ENCODE measurements at regions of chr7 and their contacts with region 1.

Region 1: GRCh38 chr7:106041140-106041717 is 70.9 kb downstream of the SYPL1 start:
- DNase-seq: peak in 3 of 9 experiments; percentile 40 to 59 (median 51)
- ATAC-seq: peak; percentile 32
- H3K4me3 ChIP-seq: no peak overlapping the region
- H3K4me3 Mint-ChIP-seq: peak overlapping the region; percentile 6
- H3K27ac ChIP-seq: no peak overlapping the region
- H3K27ac Mint-ChIP-seq: peak overlapping the region; percentile 68
- H3K4me1 ChIP-seq: peaks cover 28% of the 10 kb centered on the region
- H3K4me1 Mint-ChIP-seq: peaks cover 39% of the 10 kb centered on the region
- H3K27me3 ChIP-seq: no peaks in the 10 kb centered on the region
- H3K27me3 Mint-ChIP-seq: no peaks in the 10 kb centered on the region
- CTCF ChIP-seq: peak; percentile 61

Region 2: GRCh38 chr7:105664816-105665525 is 376.3 kb before region 1 on chr7:
- CTCF ChIA-PET with region 1: interaction called, 114 read pairs
- POLR2A ChIA-PET with region 1: no interaction called
- intact Hi-C with region 1: no loop called
- DNase-seq: no peak
- ATAC-seq: no peak
- H3K4me3 ChIP-seq: no peak overlapping the region
- H3K4me3 Mint-ChIP-seq: no peak overlapping the region
- H3K27ac ChIP-seq: no peak overlapping the region
- H3K27ac Mint-ChIP-seq: no peak overlapping the region
- H3K4me1 ChIP-seq: no peaks in the 10 kb centered on the region
- H3K4me1 Mint-ChIP-seq: no peaks in the 10 kb centered on the region
- H3K27me3 ChIP-seq: no peaks in the 10 kb centered on the region
- H3K27me3 Mint-ChIP-seq: no peaks in the 10 kb centered on the region
- CTCF ChIP-seq: no peak

Region 3: GRCh38 chr7:105691733-105692564 is 349.3 kb before region 1 on chr7:
- CTCF ChIA-PET with region 1: interaction called, 17 read pairs
- POLR2A ChIA-PET with region 1: no interaction called
- intact Hi-C with region 1: loop called in 1 of 2 experiments (anchors 1 kb)
- DNase-seq: peak; percentile 45 to 91 (median 71)
- ATAC-seq: peak; percentile 75
- H3K4me3 ChIP-seq: peak overlapping the region; percentile 69 to 72
- H3K4me3 Mint-ChIP-seq: peak overlapping the region; percentile 93
- H3K27ac ChIP-seq: peak overlapping the region; percentile 85 to 96
- H3K27ac Mint-ChIP-seq: peak overlapping the region; percentile 98
- H3K4me1 ChIP-seq: peaks cover 34% of the 10 kb centered on the region
- H3K4me1 Mint-ChIP-seq: peaks cover 64% of the 10 kb centered on the region
- H3K27me3 ChIP-seq: no peaks in the 10 kb centered on the region
- H3K27me3 Mint-ChIP-seq: no peaks in the 10 kb centered on the region
- CTCF ChIP-seq: no peak

Region 4: GRCh38 chr7:105934572-105935185 is 106.5 kb before region 1 on chr7:
- CTCF ChIA-PET with region 1: interaction called, 46 read pairs
- POLR2A ChIA-PET with region 1: no interaction called
- intact Hi-C with region 1: loop called (anchors 1 to 2 kb)
- DNase-seq: peak in 2 of 9 experiments; percentile 11 to 49
- ATAC-seq: no peak
- H3K4me3 ChIP-seq: no peak overlapping the region
- H3K4me3 Mint-ChIP-seq: no peak overlapping the region
- H3K27ac ChIP-seq: no peak overlapping the region
- H3K27ac Mint-ChIP-seq: no peak overlapping the region
- H3K4me1 ChIP-seq: no peaks in the 10 kb centered on the region
- H3K4me1 Mint-ChIP-seq: peaks cover 8% of the 10 kb centered on the region
- H3K27me3 ChIP-seq: no peaks in the 10 kb centered on the region
- H3K27me3 Mint-ChIP-seq: no peaks in the 10 kb centered on the region
- CTCF ChIP-seq: no peak

Region 5: DNA sequence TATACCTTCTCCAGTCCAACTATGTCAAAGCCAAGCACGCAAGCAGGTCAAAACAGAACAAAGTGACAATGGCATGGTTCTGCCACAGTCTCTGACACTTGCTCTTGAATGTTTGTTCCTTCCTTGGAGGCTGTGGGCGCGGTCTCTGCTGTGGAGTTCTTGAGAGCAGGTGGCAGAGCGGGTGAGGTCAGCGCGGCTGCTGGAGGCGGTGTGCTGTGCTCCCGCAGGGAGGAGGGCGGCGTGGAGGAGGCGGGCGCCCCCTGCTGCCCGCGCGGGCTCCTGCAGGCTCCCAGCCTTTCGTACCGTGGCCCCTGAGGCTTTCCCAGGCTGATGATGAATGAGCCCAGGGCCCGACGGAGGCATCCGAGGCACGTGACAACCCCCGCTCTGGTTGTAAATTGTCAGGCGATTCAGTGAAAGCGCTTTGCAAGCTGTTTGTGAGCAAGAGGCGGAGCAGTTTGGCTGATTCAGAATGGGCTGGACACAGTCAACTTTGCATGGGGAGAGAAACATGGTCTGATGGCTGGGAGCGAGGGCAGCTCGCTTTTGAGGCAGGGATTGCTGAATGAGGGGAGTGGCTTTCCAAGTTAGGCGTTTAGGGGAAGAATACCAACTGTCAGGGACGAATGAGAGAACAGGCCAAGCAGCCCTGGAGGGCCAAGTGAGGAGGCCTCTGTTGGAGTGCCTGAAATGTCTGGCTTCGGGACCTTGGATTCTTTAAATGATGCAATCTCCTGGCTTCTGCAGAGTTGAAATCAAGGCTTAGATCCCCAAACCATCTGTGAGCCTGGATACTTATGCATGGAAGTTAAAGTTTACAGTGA is 31.6 kb before region 1 on chr7:
- CTCF ChIA-PET with region 1: interaction called, 73 read pairs
- POLR2A ChIA-PET with region 1: no interaction called
- intact Hi-C with region 1: loop called (anchors 1 kb)
- DNase-seq: peak; percentile 61 to 89 (median 87)
- ATAC-seq: peak; percentile 98
- H3K4me3 ChIP-seq: no peak overlapping the region
- H3K4me3 Mint-ChIP-seq: peak overlapping the region; percentile 16
- H3K27ac ChIP-seq: no peak overlapping the region
- H3K27ac Mint-ChIP-seq: peak overlapping the region; percentile 18
- H3K4me1 ChIP-seq: peaks cover 32% of the 10 kb centered on the region
- H3K4me1 Mint-ChIP-seq: peaks cover 36% of the 10 kb centered on the region
- H3K27me3 ChIP-seq: no peaks in the 10 kb centered on the region
- H3K27me3 Mint-ChIP-seq: no peaks in the 10 kb centered on the region
- CTCF ChIP-seq: peak; percentile 91

Measured in CD8-positive, alpha-beta T cell (primary cell).